Caco-2 (cell line): ENCODE measurements at regions of chr6 and their contacts with region 1.

Region 1: GRCh38 chr6:38493931-38494547 is 145.7 kb downstream of the BTBD9 start:
- DNase-seq: peak; percentile 62 to 73
- H3K4me3 ChIP-seq: no peak overlapping the region
- H3K4me3 Mint-ChIP-seq: no peak overlapping the region
- H3K27ac Mint-ChIP-seq: no peak overlapping the region
- H3K4me1 ChIP-seq: no peaks in the 10 kb centered on the region
- H3K4me1 Mint-ChIP-seq: no peaks in the 10 kb centered on the region
- H3K27me3 ChIP-seq: no peaks in the 10 kb centered on the region
- H3K27me3 Mint-ChIP-seq: no peaks in the 10 kb centered on the region
- CTCF ChIP-seq: peak; percentile 74 to 80

Region 2: GRCh38 chr6:38034274-38034914 is 459.6 kb before region 1 on chr6:
- CTCF ChIA-PET with region 1: no interaction called
- POLR2A ChIA-PET with region 1: no interaction called
- intact Hi-C with region 1: loop called (anchors 2 kb)
- DNase-seq: peak in 1 of 2 experiments; percentile 23
- H3K4me3 ChIP-seq: no peak overlapping the region
- H3K4me3 Mint-ChIP-seq: no peak overlapping the region
- H3K27ac Mint-ChIP-seq: no peak overlapping the region
- H3K4me1 ChIP-seq: no peaks in the 10 kb centered on the region
- H3K4me1 Mint-ChIP-seq: no peaks in the 10 kb centered on the region
- H3K27me3 ChIP-seq: no peaks in the 10 kb centered on the region
- H3K27me3 Mint-ChIP-seq: no peaks in the 10 kb centered on the region
- CTCF ChIP-seq: peak; percentile 14 to 68

Region 3: GRCh38 chr6:38187325-38187724 is 306.7 kb before region 1 on chr6:
- CTCF ChIA-PET with region 1: no interaction called
- POLR2A ChIA-PET with region 1: no interaction called
- intact Hi-C with region 1: loop called (anchors 10 kb)
- DNase-seq: no peak
- H3K4me3 ChIP-seq: no peak overlapping the region
- H3K4me3 Mint-ChIP-seq: no peak overlapping the region
- H3K27ac Mint-ChIP-seq: peak overlapping the region; percentile 8
- H3K4me1 ChIP-seq: no peaks in the 10 kb centered on the region
- H3K4me1 Mint-ChIP-seq: peaks cover 10% of the 10 kb centered on the region
- H3K27me3 ChIP-seq: no peaks in the 10 kb centered on the region
- H3K27me3 Mint-ChIP-seq: no peaks in the 10 kb centered on the region
- CTCF ChIP-seq: no peak

Region 4: DNA sequence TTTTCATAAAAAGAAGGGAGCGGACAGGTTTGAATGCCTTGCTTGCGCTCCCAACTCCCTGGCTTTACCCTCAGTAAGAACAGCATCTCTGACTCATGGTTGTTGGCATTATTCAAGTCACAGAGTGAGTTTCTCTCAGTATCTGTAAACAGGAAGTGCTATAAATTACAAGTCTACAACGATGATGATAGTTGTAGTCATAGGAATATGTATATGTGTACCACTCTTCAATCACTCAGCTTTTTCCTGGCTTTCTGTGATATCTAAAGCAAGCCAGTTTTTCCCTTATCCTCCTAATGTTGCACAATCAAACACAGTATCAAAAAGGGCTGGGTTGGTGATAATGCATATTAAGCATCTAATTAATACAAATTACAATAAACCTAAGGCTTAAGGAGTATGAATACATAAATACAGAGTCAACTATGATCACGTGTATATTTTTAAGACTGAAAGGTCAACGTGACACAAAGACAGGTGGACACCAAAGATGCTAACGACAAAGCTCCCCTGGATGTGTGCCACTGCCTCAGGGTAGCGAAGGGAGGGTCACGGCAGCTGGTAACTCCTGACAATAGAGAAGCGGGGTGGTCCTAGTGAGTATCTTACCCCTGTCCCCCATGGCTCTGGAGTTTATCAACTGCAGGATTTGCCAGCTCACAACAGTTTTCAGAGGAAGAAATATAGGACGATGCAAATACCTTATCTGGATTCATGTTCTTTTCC is 57.1 kb before region 1 on chr6:
- CTCF ChIA-PET with region 1: no interaction called
- POLR2A ChIA-PET with region 1: no interaction called
- intact Hi-C with region 1: no loop called
- DNase-seq: no peak
- H3K4me3 ChIP-seq: no peak overlapping the region
- H3K4me3 Mint-ChIP-seq: no peak overlapping the region
- H3K27ac Mint-ChIP-seq: no peak overlapping the region
- H3K4me1 ChIP-seq: peaks cover 10% of the 10 kb centered on the region; the same call in 1 of the 2 replicates
- H3K4me1 Mint-ChIP-seq: peaks cover 14% of the 10 kb centered on the region
- H3K27me3 ChIP-seq: no peaks in the 10 kb centered on the region
- H3K27me3 Mint-ChIP-seq: no peaks in the 10 kb centered on the region
- CTCF ChIP-seq: no peak

Region 5: DNA sequence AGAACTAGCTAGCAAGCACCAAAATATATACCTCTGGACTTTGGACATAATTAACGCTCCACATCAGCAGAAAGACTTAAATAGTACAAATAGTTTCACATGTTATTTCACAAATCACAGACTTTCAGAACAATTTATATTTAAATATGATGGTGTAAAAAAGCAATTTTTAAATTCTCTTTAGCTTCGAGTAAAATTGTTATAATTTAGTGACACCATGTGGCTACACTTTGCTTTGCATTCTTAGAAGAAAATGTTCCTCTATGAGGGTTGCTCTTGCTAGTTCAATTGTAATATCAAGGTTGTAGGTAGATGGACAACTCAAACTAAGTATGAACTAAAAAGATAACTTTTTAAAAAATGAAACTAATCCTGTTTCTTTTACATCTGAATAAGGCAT is 76.7 kb after region 1 on chr6:
- CTCF ChIA-PET with region 1: interaction called, 12 read pairs
- POLR2A ChIA-PET with region 1: no interaction called
- intact Hi-C with region 1: loop called (anchors 2 kb)
- DNase-seq: no peak
- H3K4me3 ChIP-seq: no peak overlapping the region
- H3K4me3 Mint-ChIP-seq: no peak overlapping the region
- H3K27ac Mint-ChIP-seq: peak overlapping the region; percentile 49
- H3K4me1 ChIP-seq: peaks cover 13% of the 10 kb centered on the region
- H3K4me1 Mint-ChIP-seq: peaks cover 32% of the 10 kb centered on the region
- H3K27me3 ChIP-seq: no peaks in the 10 kb centered on the region
- H3K27me3 Mint-ChIP-seq: no peaks in the 10 kb centered on the region
- CTCF ChIP-seq: peak in 1 of 2 experiments; percentile 47

Region 6: DNA sequence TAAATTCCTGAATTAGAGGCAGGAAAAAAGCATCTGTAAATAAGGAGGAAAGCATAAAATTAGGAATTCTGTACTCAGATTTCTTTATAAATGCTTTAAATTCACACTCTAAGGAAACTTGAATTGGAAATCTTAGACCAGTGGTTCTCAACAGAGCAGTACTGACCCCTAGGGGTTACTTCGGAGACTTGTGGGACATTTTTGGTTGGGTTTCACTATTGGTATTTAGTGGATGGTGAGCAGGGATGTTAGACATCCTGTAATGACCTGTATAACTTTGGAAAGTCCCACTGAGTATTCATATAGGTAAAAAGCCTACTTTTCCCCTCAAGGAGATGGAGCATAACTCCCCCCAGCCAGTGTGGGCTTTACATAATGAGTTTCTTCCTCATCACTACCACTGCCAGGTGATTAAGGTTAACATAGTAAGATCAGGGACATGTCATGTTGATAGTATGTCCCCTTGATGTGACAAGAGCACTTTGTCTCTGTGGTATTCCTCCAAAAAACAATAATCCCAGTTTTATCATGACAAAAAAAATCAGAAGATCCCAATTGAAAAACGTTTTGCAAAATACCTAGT is 177.9 kb after region 1 on chr6:
- CTCF ChIA-PET with region 1: no interaction called
- POLR2A ChIA-PET with region 1: no interaction called
- intact Hi-C with region 1: loop called (anchors 2 kb)
- DNase-seq: peak in 1 of 2 experiments; percentile 59
- H3K4me3 ChIP-seq: no peak overlapping the region
- H3K4me3 Mint-ChIP-seq: no peak overlapping the region
- H3K27ac Mint-ChIP-seq: no peak overlapping the region
- H3K4me1 ChIP-seq: no peaks in the 10 kb centered on the region
- H3K4me1 Mint-ChIP-seq: no peaks in the 10 kb centered on the region
- H3K27me3 ChIP-seq: no peaks in the 10 kb centered on the region
- H3K27me3 Mint-ChIP-seq: no peaks in the 10 kb centered on the region
- CTCF ChIP-seq: peak; percentile 70 to 73